Pancreas (tissue), 10 donors: ENCODE measurements at regions of chr5 and their contacts with region 1.

Region 1: DNA sequence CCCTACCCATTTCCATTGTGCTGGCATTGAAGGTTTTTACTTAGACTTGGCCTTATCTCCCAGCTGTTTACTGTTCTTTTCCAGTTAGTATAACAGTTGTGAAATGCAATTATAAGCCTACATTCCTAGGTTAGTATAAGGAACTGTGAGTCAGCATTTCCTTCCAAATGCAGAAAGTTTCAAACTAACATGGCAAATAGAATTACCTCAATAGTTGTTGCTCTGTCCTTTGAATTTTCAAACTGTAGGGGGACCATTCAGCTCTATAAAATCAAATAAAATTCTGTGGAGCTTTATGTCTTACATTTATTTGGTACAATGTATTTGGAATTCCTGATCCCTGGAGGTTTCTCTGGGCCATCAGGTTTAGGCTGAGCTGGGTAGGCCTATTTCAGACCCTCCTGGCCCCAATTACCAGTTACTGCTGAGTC is 47.2 kb downstream of the ARHGEF28 start:
- DNase-seq: no peak
- ATAC-seq: peak; percentile 78 to 89 (median 88)
- H3K4me3 ChIP-seq: no peak overlapping the region
- H3K27ac ChIP-seq: peak overlapping the region in 2 of 4 donors; percentile 48 to 82
- H3K4me1 ChIP-seq: peaks cover 46 to 57% (median 49%) of the 10 kb centered on the region in 3 donors
- H3K27me3 ChIP-seq: no peaks in the 10 kb centered on the region
- CTCF ChIP-seq: no peak

Region 2: DNA sequence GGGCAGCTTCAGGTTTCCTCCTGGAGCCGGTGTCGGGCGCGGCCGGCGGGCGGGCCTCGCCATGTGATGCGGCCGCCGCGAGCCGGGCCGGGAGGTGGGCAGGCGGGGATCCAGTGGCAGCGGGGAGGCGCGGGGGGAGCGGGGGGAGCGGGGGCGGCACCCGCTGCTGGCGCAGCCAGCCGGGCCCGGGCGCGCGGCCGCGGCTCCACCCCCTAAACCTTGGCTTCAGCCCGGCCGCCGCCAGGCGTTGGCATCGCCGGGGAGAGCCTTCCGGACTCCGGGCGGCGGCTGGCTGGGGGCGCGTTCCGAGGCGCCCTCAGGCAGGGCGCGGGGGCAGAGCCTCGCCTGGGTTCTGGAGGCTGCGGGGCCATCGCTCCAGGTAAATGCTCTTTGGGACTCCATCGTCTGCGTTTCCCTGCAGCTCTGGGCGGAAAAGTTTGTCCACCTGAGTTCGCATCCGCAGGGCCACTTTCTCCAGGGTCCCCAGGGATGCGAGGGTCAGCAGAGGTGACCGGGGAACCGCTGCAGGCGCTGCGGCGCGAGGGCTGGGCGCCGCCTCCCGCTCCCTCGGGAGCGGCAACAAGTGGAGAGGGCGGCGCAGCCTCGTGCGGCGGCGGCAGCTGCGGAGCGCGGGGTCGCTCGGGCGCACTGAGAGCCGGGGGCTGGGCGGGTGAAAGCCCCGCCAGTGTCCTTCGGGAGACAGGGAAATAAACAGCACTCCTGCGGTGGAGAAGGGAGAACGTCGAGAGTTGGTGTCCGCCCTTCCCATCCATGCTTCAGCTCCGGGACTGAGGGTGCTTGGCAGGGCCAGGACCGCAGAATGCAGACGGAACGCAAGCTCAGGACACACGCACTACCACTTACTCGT is 47.0 kb before region 1 on chr5 and contains the start of gene ARHGEF28:
- intact Hi-C with region 1: loop called in 1 of 3 experiments (anchors 10 kb)
- DNase-seq: peak; percentile 83 to 90 (median 88)
- ATAC-seq: peak; percentile 78 to 88 (median 85)
- H3K4me3 ChIP-seq: peak within 1 kb of the TSS; percentile 35 to 83 (median 57)
- H3K27ac ChIP-seq: peak within 1 kb of the TSS; percentile 77 to 91 (median 85)
- H3K4me1 ChIP-seq: peaks cover 15 to 41% (median 40%) of the 10 kb centered on the region in 3 donors
- H3K27me3 ChIP-seq: no peaks in the 10 kb centered on the region
- CTCF ChIP-seq: no peak
- total RNA-seq, gene ARHGEF28: 18.2 to 36.2 (median 27.9) TPM

Region 3: GRCh38 chr5:73774924-73775323 is 101.7 kb after region 1 on chr5:
- intact Hi-C with region 1: no loop called
- DNase-seq: no peak
- ATAC-seq: no peak
- H3K4me3 ChIP-seq: no peak overlapping the region
- H3K27ac ChIP-seq: no peak overlapping the region
- H3K4me1 ChIP-seq: no peaks in the 10 kb centered on the region
- H3K27me3 ChIP-seq: no peaks in the 10 kb centered on the region
- CTCF ChIP-seq: no peak